Dendritic cell treated with granulocyte-macrophage colony-stimulating factor and Interleukin-4, amounts not matched to agents 40 ng/mL and 50 ng/mL, for 4 days (primary cell): ENCODE measurements at regions of chr11 and their contacts with region 1.

Region 1: DNA sequence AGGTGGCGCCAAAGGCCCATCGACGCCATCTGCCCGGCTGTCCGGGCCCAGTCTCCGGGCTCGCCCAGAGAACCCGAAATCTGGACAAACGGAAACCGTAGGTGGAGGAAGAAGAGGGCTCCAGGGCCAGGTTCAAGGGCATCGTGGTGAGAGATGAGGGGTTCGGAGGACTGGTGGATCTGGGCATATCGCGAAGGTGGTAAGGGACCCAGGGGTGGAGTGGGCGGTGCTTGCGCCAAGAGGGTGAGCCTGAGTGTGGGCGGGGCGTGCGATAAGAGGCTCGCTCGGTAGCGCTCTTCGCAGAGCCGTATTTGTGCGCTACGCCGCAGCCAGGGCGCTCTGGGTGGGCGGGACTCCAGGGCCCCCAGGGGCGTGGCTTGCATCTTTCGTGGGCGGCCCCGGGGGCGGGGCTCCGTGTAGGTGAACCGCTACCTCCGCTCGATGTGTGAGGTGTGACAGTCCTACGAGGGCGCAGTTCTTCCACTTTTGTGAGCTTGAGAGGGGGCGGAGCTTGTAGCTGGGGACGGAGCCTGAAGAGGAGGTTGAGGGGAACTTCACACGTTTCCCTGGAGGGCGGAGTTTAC is 4.8 kb downstream of the CD248 start:
- H3K4me3 Mint-ChIP-seq: peak overlapping the region; percentile 88
- H3K27ac Mint-ChIP-seq: peak overlapping the region; percentile 89
- H3K4me1 Mint-ChIP-seq: peaks cover 27% of the 10 kb centered on the region
- H3K27me3 Mint-ChIP-seq: peaks cover 38% of the 10 kb centered on the region

Region 2: GRCh38 chr11:66268283-66268951 is 43.6 kb before region 1 on chr11 and contains the start of gene RAB1B:
- intact Hi-C with region 1: no loop called
- H3K4me3 Mint-ChIP-seq: peak within 1 kb of the TSS; percentile 91
- H3K27ac Mint-ChIP-seq: peak within 1 kb of the TSS; percentile 87
- H3K4me1 Mint-ChIP-seq: peaks cover 44% of the 10 kb centered on the region
- H3K27me3 Mint-ChIP-seq: no peaks in the 10 kb centered on the region

Region 3: GRCh38 chr11:66328307-66329144 is 16.5 kb after region 1 on chr11:
- intact Hi-C with region 1: loop called (anchors 1 kb)
- H3K4me3 Mint-ChIP-seq: no peak overlapping the region
- H3K27ac Mint-ChIP-seq: peak overlapping the region; percentile 30
- H3K4me1 Mint-ChIP-seq: peaks cover 13% of the 10 kb centered on the region
- H3K27me3 Mint-ChIP-seq: peaks cover 5% of the 10 kb centered on the region

Region 4: GRCh38 chr11:66388756-66389386 is 76.8 kb after region 1 on chr11:
- intact Hi-C with region 1: loop called (anchors 2 kb)
- H3K4me3 Mint-ChIP-seq: no peak overlapping the region
- H3K27ac Mint-ChIP-seq: no peak overlapping the region
- H3K4me1 Mint-ChIP-seq: no peaks in the 10 kb centered on the region
- H3K27me3 Mint-ChIP-seq: peaks cover 18% of the 10 kb centered on the region